ENCODE measurements at regions of chr2 and their contacts with region 1.

Region 1: GRCh38 chr2:201451292-201452057 is at the starts of genes STRADB and TRAK2:
- DNase-seq: peak; percentile 95
- ATAC-seq: peak; percentile 88
- H3K4me3 Mint-ChIP-seq: peak within 1 kb of the TSS; percentile 88
- H3K27ac Mint-ChIP-seq: peak within 1 kb of the TSS; percentile 94
- H3K4me1 Mint-ChIP-seq: peaks cover 39% of the 10 kb centered on the region
- H3K27me3 Mint-ChIP-seq: no peaks in the 10 kb centered on the region
- total RNA-seq, gene STRADB: 24.9 to 28.9 TPM
- total RNA-seq, gene TRAK2: 43.1 to 48.8 TPM

Region 2: GRCh38 chr2:201257956-201258665 is 193.4 kb before region 1 on chr2:
- POLR2A ChIA-PET with region 1: interaction called, 31 read pairs
- DNase-seq: peak; percentile 80
- ATAC-seq: peak; percentile 70
- H3K4me3 Mint-ChIP-seq: peak overlapping the region; percentile 83
- H3K27ac Mint-ChIP-seq: peak overlapping the region; percentile 98
- H3K4me1 Mint-ChIP-seq: peaks cover 60% of the 10 kb centered on the region
- H3K27me3 Mint-ChIP-seq: no peaks in the 10 kb centered on the region

Region 3: DNA sequence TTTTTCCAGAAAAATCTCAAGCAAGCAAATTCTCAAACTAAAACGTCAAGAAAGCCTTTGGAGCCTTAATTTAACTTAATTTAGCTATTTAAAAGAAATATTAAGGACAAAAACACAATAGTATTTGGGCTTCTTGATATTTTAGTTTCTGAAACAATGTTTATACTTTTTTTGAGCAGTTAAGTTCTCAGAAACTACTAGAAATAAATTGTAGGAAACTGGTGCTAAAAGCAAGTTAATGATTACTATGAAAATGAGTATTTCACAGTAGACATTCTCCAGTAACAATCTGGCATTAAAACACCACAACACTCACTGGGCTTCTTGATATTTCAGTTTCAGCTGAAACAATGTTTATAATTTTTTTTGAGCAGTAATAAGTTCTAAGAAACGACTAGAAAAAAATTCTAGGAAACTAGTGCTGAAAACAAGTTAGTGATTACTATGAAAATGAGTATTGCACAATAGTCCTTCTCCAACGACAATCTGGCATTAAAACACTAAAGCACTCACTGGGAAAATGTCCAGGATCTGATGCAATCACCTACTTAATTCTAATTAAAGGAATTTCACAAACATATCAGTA is 45.3 kb before region 1 on chr2:
- POLR2A ChIA-PET with region 1: interaction called, 17 read pairs
- DNase-seq: no peak
- ATAC-seq: peak; percentile 64
- H3K4me3 Mint-ChIP-seq: peak overlapping the region; percentile 47
- H3K27ac Mint-ChIP-seq: peak overlapping the region; percentile 63
- H3K4me1 Mint-ChIP-seq: peaks cover 48% of the 10 kb centered on the region
- H3K27me3 Mint-ChIP-seq: no peaks in the 10 kb centered on the region

Region 4: DNA sequence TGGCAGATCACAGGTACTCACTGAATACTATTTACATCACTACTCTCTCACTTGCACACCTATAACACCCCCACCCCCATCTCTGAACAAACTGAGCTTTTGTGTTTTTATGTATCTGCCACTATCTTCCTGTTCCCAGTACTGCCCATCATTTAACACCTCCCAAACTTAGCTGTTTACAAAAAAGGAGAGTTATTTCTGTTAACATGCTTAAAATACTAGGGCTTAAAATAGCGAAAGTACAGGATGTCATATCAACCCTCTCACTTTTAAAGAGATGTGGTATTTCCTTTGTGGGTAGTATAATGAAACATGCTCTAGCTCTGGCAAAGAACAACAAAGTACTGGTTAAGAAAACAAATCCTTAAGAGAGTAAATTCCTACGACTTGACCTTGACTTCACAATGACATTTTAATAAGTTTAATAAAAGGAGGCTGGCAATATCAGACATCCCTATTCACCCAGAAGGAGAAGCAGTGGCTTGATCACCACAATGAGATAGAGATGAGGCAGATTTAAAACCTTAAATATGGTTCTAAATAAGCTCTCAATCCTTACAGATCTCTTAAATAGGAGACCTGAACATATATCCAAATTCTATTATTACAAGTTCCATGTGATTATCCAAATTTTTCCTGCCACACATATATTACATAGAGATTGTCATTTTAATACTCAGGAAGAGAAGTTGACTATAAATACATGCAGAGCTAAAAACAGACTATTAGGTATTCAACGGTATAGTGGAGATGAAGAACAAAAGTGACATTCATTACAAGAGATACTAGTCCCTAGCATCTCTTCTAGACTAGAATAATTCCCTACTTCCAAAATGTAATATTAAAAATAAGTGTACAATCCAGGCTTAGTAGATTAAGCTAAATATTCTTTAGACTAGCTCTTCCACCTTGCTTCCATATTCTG is 37.1 kb before region 1 on chr2:
- POLR2A ChIA-PET with region 1: interaction called, 18 read pairs
- DNase-seq: no peak
- ATAC-seq: peak; percentile 81
- H3K4me3 Mint-ChIP-seq: no peak overlapping the region
- H3K27ac Mint-ChIP-seq: no peak overlapping the region
- H3K4me1 Mint-ChIP-seq: peaks cover 15% of the 10 kb centered on the region
- H3K27me3 Mint-ChIP-seq: no peaks in the 10 kb centered on the region

Region 5: DNA sequence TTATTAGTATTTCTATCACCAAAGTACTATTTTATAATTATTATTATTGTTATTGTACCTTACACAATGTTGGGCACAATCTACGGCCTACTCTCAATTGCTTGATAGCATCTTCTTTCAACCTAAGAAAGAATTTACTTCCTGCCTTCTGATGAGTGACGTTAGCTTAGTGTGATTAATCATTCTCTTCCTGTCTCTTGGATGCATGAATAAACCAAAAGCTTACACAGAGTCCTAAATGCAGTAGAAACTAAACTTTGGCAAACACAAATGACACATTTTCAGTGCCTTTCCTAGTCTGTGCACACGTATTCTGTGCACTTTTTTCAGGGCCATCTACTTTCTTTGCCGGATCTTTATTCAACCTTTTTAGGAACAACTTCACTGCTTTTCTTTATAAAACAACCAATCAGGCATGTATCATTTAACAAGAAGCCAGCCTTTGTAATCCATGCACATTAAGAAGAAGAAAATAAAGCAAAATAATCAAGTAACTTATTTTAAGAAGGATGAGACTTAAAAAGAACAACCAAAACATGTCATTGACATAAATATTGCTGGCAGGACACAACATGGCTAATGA is 19.3 kb before region 1 on chr2:
- POLR2A ChIA-PET with region 1: interaction called, 19 read pairs
- DNase-seq: no peak
- ATAC-seq: peak; percentile 98
- H3K4me3 Mint-ChIP-seq: peak overlapping the region; percentile 38
- H3K27ac Mint-ChIP-seq: peak overlapping the region; percentile 87
- H3K4me1 Mint-ChIP-seq: peaks cover 33% of the 10 kb centered on the region
- H3K27me3 Mint-ChIP-seq: no peaks in the 10 kb centered on the region

Region 6: GRCh38 chr2:201642579-201643215 is 191.2 kb after region 1 on chr2:
- POLR2A ChIA-PET with region 1: interaction called, 22 read pairs
- DNase-seq: peak; percentile 97
- ATAC-seq: peak; percentile 89
- H3K4me3 Mint-ChIP-seq: peak overlapping the region; percentile 97
- H3K27ac Mint-ChIP-seq: peak overlapping the region; percentile 98
- H3K4me1 Mint-ChIP-seq: peaks cover 15% of the 10 kb centered on the region
- H3K27me3 Mint-ChIP-seq: no peaks in the 10 kb centered on the region

Region 7: DNA sequence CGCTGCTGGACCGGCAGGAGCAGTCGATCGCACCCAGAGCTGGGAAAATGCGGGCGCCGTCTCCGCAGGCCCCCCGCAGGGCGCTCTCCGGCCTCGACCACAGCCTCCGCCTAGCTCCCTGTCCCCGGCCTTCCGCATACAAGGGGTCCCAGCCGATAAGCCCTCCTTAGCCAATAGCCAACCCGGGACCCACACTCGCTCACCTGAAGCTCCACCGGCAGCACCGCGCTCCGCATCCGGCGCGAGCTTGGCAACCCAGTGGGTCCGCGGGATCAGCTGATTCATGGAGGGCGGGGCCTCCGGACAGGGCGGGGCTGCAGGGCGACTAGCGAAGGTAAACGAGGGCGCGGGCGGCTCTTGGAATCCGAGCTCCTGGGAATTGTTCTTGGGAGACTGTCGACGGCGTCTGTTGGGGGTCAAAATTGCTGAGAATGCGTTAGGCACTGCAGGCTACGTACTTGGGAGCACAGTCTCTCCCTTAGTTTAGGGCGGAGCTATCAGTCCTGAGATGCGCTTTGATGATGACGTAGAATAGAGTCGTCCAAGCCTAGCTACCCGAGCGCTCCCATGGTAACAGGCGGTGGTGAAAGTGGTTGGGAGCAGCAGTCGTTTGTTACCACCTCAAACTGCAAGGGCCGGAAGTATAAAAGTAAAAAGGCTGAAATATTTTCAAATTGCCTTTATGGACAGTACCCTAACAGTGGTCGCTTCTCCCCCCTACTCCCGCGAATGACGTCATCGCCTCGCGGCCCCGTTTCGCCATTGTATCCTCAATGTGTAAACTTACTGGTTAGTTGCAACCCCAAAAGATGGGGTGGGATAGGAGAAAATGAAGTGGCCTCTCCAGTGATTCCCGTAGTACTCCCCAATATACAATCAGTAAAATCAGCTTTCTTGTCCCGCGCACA is 329.5 kb after region 1 on chr2 and contains the start of gene ALS2:
- POLR2A ChIA-PET with region 1: interaction called, 12 read pairs
- DNase-seq: peak; percentile 97
- ATAC-seq: peak; percentile 95
- H3K4me3 Mint-ChIP-seq: peak within 1 kb of the TSS; percentile 98
- H3K27ac Mint-ChIP-seq: peak within 1 kb of the TSS; percentile 98
- H3K4me1 Mint-ChIP-seq: peaks cover 23% of the 10 kb centered on the region
- H3K27me3 Mint-ChIP-seq: peaks cover 11% of the 10 kb centered on the region
- total RNA-seq, gene ALS2: 15.3 to 16.7 TPM